Colonic mucosa (tissue), 4 donors: ENCODE measurements at regions of chr12 and their contacts with region 1.

Region 1: GRCh38 chr12:8544295-8544694 is 3.6 kb upstream of the CLEC4E start:
- DNase-seq: peak; percentile 71
- H3K4me3 ChIP-seq: no peak overlapping the region
- H3K27ac ChIP-seq: no peak overlapping the region
- H3K4me1 ChIP-seq: no peaks in the 10 kb centered on the region
- H3K27me3 ChIP-seq: no peaks in the 10 kb centered on the region
- CTCF ChIP-seq: peak; percentile 95

Region 2: DNA sequence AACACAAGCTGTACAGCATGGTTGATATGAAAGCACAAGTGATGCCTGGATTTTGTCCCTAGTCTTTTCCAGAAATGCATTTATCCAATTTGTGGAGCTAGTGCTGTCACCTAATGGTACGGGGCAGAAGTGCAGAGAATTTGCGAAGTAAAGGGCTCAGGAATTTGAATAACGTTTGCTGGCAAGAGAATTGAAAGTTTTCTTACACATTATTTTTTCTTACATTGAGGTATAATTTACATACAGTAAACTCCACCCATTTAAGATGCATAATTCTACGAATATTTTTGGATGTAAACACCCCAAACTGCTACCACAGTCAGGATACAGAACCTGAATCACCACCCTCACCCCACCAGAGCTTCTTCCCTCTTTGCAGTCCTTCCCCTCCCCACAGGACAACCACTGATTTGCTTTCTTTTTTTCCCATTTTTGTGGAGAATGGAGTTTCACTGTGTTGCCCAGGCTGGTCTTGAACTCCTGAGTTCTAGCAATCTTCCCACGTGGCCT is 64.8 kb after region 1 on chr12:
- intact Hi-C with region 1: loop called (anchors 10 kb)
- DNase-seq: no peak
- H3K4me3 ChIP-seq: no peak overlapping the region
- H3K27ac ChIP-seq: no peak overlapping the region
- H3K4me1 ChIP-seq: no peaks in the 10 kb centered on the region
- H3K27me3 ChIP-seq: no peaks in the 10 kb centered on the region
- CTCF ChIP-seq: peak; percentile 28

Region 3: GRCh38 chr12:9049520-9050133 is 505.3 kb after region 1 on chr12:
- intact Hi-C with region 1: loop called (anchors 10 kb)
- DNase-seq: no peak
- H3K4me3 ChIP-seq: no peak overlapping the region
- H3K27ac ChIP-seq: no peak overlapping the region
- H3K4me1 ChIP-seq: no peaks in the 10 kb centered on the region
- H3K27me3 ChIP-seq: no peaks in the 10 kb centered on the region
- CTCF ChIP-seq: peak; percentile 26